Right ventricle myocardium inferior (tissue), 1 donor: ENCODE measurements at regions of chr12 and their contacts with region 1.

Region 1: GRCh38 chr12:109093022-109093918 is at the start of gene ALKBH2:
- DNase-seq: peak; percentile 97
- ATAC-seq: peak; percentile 68
- total RNA-seq, gene ALKBH2: 7.7 TPM

Region 2: DNA sequence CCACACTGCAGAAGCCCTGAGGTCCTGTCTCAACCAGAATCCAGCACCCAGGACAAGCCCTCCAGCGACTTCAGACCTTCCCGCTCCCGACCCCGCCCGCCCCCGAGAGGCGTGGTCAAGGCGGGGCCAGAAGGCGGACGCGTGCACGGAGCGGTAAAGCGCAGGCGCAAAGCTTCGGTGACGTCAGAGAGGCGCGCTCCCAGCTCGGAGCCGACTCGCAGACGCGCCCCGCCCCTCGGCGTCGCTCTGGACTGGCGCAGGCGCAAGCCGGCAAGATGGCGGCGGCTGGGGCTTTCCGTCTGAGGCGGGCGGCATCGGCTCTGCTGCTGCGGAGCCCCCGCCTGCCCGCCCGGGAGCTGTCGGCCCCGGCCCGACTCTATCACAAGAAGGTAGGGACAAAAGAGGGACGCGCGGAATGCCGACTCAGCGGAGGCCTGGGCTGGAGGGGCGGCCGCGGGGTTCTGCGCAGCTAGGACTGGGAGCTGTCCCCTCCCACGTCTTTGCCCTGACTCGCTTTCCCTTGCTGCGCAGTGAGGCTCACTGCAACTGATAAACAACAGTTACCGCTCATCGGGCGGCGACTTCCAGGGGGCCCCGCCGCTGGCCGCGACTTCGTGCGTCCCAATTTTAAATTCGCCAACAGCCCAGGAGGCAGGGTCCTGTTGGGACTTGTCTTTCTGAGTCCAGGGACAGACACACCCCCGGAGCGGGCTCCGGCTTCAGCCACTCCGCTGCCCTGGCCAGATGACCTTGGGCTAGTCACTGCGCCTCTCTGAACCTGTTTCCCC is 530.7 kb before region 1 on chr12 and contains the start of gene ISCU:
- intact Hi-C with region 1: loop called (anchors 2 kb)
- DNase-seq: peak; percentile 98
- ATAC-seq: peak; percentile 91
- total RNA-seq, gene ISCU: 444 TPM

Region 3: DNA sequence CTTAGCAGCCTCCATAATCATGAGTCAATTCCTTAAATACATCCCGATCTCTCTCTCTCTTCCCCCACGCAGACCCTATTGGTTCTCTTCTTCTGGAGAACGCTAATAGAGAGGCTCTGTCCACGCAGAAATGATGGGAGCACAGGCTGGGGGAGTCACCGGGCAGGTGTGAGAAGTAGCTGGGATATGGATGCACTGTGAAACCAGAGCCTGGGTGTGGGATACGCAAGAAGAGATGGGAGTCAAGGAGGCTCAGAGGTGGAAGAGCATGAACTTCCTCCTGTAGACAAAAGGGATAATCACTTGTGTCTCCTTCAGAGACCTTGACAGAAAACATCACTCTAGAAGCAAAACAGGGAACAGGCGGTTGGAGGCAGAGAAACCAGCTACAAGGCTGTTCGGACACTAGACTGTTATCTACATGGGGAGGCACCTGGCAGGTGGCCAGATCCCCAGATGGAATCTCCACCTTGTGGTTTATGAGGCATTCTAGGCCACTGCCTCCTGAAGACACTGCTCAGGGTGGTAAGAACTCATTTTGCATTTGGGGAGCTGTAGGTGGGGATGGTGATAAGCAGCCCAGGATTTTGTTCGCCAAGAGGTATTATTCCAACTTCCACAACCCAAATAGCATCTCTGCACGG is 452.3 kb before region 1 on chr12:
- intact Hi-C with region 1: loop called (anchors 10 kb)
- DNase-seq: no peak
- ATAC-seq: no peak

Region 4: DNA sequence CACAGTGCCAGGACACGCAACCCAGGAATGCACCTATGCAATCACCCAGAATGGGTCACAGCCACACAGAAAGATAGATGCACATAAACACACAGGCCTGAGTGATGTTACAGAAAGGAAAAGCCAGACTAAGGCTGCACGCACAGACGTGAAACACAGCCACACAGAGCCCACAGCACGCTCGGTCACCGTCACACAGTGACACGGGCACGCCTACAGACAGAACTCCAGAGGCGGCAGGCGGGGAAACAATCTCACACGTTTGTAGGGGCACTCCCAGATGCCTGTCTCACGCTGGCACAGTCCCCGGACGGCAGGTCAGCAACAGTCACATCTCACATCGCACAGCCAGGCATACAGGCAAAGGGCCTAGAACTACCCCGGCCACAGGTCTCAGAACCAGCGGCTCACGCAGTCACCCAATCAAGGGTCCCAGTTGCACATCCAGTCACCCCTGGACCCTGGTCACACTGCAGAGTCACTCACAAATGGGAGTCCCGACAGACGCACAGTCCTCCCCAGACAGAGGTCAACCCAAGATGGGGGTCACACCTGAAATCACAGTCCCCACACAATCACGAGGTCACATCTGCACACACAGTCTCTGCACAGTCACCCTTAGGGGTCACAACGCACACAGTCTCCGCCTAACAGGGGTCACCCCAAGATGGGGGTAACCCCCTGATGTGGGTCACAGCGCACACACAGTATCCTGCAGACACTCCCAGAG is 236.7 kb before region 1 on chr12:
- intact Hi-C with region 1: loop called (anchors 10 kb)
- DNase-seq: peak; percentile 90
- ATAC-seq: peak; percentile 62

Region 5: GRCh38 chr12:108884116-108885012 is 208.9 kb before region 1 on chr12:
- intact Hi-C with region 1: loop called (anchors 10 kb)
- DNase-seq: peak; percentile 71
- ATAC-seq: peak; percentile 54

Region 6: DNA sequence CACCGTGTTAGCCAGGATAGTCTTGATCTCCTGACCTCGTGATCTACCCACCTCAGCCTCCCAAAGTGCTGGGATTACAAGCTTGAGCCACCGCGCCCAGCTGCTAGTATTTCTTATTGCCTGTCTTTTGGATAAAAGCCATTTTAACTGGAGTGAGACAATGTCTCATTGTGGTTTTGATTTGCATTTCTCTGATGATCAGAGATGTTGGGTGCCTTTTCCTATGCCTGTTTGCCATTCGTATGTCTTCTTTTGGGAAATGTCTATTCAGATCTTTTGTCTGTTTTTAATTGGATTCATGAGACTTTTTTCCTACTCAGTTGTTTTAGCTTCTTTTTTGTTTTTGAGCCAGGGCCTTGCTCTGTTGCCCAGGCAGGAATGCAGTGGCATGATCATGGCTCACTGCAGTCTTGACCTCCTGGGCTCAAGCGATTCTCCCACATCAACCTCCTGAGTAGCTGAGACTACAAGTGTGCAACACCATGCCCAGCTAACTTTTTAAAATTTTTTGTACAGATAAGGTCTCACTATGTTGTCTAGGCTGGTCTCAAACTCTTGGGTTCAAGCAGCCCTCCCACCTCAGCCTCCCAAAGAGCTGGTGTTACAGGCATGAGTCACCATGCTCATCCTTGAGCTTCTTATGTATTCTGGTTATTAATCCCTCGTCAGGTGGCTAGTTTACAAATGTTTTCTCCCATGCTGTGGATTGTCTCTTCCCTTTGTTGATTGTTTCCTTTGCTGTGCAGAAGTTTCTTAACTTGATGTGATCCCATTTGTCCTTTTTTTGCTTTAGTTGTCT is 89.0 kb after region 1 on chr12:
- intact Hi-C with region 1: no loop called
- DNase-seq: no peak
- ATAC-seq: no peak